ENCODE measurements at regions of chr5 and their contacts with region 1.

Region 1: DNA sequence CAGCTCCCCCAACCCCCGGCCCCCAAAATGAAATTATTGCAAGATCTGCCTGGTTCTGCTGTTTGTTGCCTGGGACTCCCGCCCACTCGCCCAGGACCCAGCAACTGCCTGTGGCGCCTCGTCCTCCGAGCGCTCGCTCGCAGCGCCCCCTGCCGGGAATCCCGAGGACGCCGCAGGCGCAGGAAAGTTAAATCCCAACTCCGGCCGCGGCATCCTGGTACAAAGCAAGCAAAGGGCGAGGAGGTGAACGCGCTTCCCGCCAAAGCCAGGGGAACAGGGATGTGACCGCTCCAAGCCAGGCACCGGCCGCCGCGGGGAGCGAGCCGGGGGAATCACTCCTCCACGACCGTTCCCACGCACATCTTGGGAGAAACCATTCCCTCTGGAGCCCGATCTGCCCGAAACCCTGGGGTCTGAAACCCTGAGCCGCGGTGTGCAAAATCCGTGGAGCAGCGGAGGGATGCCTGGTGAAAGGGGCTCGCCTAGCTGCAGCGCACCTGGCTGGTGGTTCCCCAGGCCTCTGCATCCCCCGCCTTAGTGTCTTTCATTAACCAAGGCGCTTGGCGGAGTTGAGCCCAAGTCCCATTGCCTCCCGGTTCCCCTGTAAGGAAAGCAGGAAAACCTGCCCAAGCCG is 1.3 kb downstream of the SEMA5A start:
- DNase-seq: peak; percentile 54
- H3K4me3 Mint-ChIP-seq: peak overlapping the region; percentile 55
- H3K27ac Mint-ChIP-seq: no peak overlapping the region
- H3K4me1 Mint-ChIP-seq: peaks cover 7% of the 10 kb centered on the region
- H3K27me3 Mint-ChIP-seq: peaks cover 23% of the 10 kb centered on the region

Region 2: GRCh38 chr5:7927466-7928375 is 1616.9 kb before region 1 on chr5:
- CTCF ChIA-PET with region 1: no interaction called
- intact Hi-C with region 1: loop called (anchors 10 kb)
- DNase-seq: peak; percentile 65
- H3K4me3 Mint-ChIP-seq: no peak overlapping the region
- H3K27ac Mint-ChIP-seq: no peak overlapping the region
- H3K4me1 Mint-ChIP-seq: peaks cover 4% of the 10 kb centered on the region
- H3K27me3 Mint-ChIP-seq: peaks cover 7% of the 10 kb centered on the region

Region 3: GRCh38 chr5:9156282-9156681 is 388.3 kb before region 1 on chr5:
- CTCF ChIA-PET with region 1: no interaction called
- intact Hi-C with region 1: loop called (anchors 10 kb)
- DNase-seq: peak; percentile 31
- H3K4me3 Mint-ChIP-seq: no peak overlapping the region
- H3K27ac Mint-ChIP-seq: no peak overlapping the region
- H3K4me1 Mint-ChIP-seq: no peaks in the 10 kb centered on the region
- H3K27me3 Mint-ChIP-seq: no peaks in the 10 kb centered on the region

Region 4: GRCh38 chr5:9361835-9362234 is 182.8 kb before region 1 on chr5:
- CTCF ChIA-PET with region 1: interaction called, 3 read pairs
- intact Hi-C with region 1: loop called (anchors 1 kb)
- DNase-seq: peak; percentile 63
- H3K4me3 Mint-ChIP-seq: no peak overlapping the region
- H3K27ac Mint-ChIP-seq: no peak overlapping the region
- H3K4me1 Mint-ChIP-seq: peaks cover 16% of the 10 kb centered on the region
- H3K27me3 Mint-ChIP-seq: no peaks in the 10 kb centered on the region

Region 5: DNA sequence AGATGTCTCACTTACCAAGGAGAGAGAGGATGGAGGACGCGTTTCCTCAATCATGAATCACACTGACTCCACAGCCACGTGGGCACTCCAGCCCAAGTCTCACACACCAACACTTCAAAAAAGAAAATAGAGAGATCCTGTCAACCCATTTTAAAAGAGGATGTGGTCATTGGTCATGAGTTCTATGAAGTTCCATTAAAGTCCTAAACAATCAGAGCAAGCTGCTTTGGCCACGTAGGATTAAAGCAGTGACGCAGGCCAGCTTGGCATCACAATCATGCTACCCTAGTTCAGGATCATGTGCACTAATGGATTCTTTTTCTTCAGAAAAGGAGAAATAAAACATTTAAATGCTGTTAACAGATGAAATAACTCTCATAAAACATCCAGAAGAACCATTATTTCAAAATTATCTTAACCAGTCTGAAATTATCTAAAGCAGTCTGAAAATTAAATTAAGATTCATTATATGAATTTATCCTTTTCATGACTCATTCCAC is 106.8 kb before region 1 on chr5:
- CTCF ChIA-PET with region 1: no interaction called
- intact Hi-C with region 1: no loop called
- DNase-seq: no peak
- H3K4me3 Mint-ChIP-seq: no peak overlapping the region
- H3K27ac Mint-ChIP-seq: no peak overlapping the region
- H3K4me1 Mint-ChIP-seq: no peaks in the 10 kb centered on the region
- H3K27me3 Mint-ChIP-seq: no peaks in the 10 kb centered on the region

Region 6: GRCh38 chr5:9596171-9596780 is 51.7 kb after region 1 on chr5:
- CTCF ChIA-PET with region 1: no interaction called
- intact Hi-C with region 1: no loop called
- DNase-seq: no peak
- H3K4me3 Mint-ChIP-seq: no peak overlapping the region
- H3K27ac Mint-ChIP-seq: no peak overlapping the region
- H3K4me1 Mint-ChIP-seq: no peaks in the 10 kb centered on the region
- H3K27me3 Mint-ChIP-seq: peaks cover 9% of the 10 kb centered on the region

Region 7: DNA sequence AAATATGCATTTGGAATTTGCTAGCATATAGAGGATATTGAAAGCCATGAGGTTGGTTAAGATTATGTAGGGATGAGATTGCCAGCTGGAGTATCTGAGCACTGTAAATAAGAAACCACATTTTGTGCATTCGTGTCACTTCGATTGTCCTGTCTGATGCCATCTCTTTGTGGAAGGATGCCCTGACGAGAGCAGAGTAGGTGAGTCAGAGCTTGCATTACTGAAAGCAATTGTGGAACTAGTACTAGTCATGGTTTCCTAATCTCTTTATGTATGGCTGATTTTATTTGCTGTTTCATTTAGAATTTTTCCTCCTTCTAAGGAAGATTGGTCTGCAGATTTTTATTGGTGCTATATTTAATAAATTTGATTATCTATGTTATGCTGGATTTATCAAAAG is 100.0 kb after region 1 on chr5:
- CTCF ChIA-PET with region 1: no interaction called
- intact Hi-C with region 1: no loop called
- DNase-seq: no peak
- H3K4me3 Mint-ChIP-seq: no peak overlapping the region
- H3K27ac Mint-ChIP-seq: no peak overlapping the region
- H3K4me1 Mint-ChIP-seq: no peaks in the 10 kb centered on the region
- H3K27me3 Mint-ChIP-seq: no peaks in the 10 kb centered on the region

Region 8: DNA sequence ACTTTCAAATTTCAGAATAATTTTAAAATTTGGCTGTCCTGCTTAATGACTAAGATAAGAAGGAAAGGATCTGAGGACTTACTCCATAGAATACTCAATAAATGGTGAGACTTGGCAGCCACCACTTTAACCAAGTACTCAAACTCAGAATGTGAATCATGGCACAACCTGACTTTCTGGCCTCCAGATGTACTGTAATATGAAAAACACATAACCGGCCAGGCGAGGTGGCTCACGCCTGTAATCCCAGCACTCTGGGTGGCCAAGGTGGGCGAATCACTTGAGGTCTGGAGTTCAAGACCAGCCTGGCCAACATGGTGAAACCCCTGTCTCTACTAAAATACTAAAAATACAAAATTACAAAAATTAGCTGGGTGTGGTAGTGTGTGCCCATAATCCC is 798.9 kb after region 1 on chr5:
- CTCF ChIA-PET with region 1: no interaction called
- intact Hi-C with region 1: no loop called
- DNase-seq: no peak
- H3K4me3 Mint-ChIP-seq: no peak overlapping the region
- H3K27ac Mint-ChIP-seq: no peak overlapping the region
- H3K4me1 Mint-ChIP-seq: no peaks in the 10 kb centered on the region
- H3K27me3 Mint-ChIP-seq: peaks cover 1% of the 10 kb centered on the region